T-cell (primary cell): ENCODE measurements at regions of chr16 and their contacts with region 1.

Region 1: GRCh38 chr16:8692502-8692901 is 18.1 kb downstream of the ABAT start:
- DNase-seq: no peak
- ATAC-seq: no peak
- H3K4me3 ChIP-seq: no peak overlapping the region
- H3K4me3 Mint-ChIP-seq: no peak overlapping the region
- H3K27ac ChIP-seq: no peak overlapping the region
- H3K27ac Mint-ChIP-seq: no peak overlapping the region
- H3K4me1 ChIP-seq: no peaks in the 10 kb centered on the region
- H3K4me1 Mint-ChIP-seq: no peaks in the 10 kb centered on the region
- H3K27me3 ChIP-seq: no peaks in the 10 kb centered on the region
- H3K27me3 Mint-ChIP-seq: no peaks in the 10 kb centered on the region

Region 2: GRCh38 chr16:8391257-8391656 is 301.2 kb before region 1 on chr16:
- CTCF ChIA-PET with region 1: no interaction called
- POLR2A ChIA-PET with region 1: interaction called in 1 of 2 experiments, 11 read pairs
- DNase-seq: no peak
- ATAC-seq: no peak
- H3K4me3 ChIP-seq: no peak overlapping the region
- H3K4me3 Mint-ChIP-seq: no peak overlapping the region
- H3K27ac ChIP-seq: no peak overlapping the region
- H3K27ac Mint-ChIP-seq: no peak overlapping the region
- H3K4me1 ChIP-seq: no peaks in the 10 kb centered on the region
- H3K4me1 Mint-ChIP-seq: no peaks in the 10 kb centered on the region
- H3K27me3 ChIP-seq: no peaks in the 10 kb centered on the region
- H3K27me3 Mint-ChIP-seq: peaks cover 3% of the 10 kb centered on the region in 2 donors